Psoas muscle (tissue), 8 donors: ENCODE measurements at regions of chr15 and their contacts with region 1.

Region 1: GRCh38 chr15:90362936-90363212 is 10.8 kb downstream of the ZNF774 start:
- DNase-seq: no peak
- ATAC-seq: peak; percentile 63 to 71 (median 66)
- H3K4me3 ChIP-seq: no peak overlapping the region
- H3K27ac ChIP-seq: peak overlapping the region; percentile 85
- H3K4me1 ChIP-seq: peaks cover 21% of the 10 kb centered on the region
- H3K27me3 ChIP-seq: no peaks in the 10 kb centered on the region
- CTCF ChIP-seq: no peak

Region 2: DNA sequence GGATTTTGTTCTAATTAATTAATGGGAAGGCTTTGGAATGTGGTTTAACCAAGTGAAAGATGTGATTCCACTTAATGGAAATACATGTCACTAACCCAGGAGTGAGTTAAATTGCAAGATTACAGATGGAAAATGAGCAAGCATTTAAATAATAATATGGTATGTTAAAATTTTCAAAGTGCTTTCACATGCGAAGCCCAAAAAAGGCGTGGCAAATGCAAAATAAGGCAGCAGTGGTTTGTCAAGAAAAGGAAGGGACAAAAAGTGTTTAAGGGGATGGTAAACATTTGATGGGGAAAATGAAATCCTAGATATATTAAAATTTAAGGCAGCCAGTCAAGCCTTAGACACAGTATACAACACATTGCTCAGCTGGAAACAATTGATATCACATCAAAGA is 784.7 kb before region 1 on chr15:
- intact Hi-C with region 1: no loop called
- DNase-seq: no peak
- ATAC-seq: no peak
- H3K4me3 ChIP-seq: no peak overlapping the region
- H3K27ac ChIP-seq: no peak overlapping the region
- H3K4me1 ChIP-seq: no peaks in the 10 kb centered on the region
- H3K27me3 ChIP-seq: no peaks in the 10 kb centered on the region
- CTCF ChIP-seq: no peak

Region 3: GRCh38 chr15:90286678-90287077 is 76.2 kb before region 1 on chr15:
- intact Hi-C with region 1: no loop called
- DNase-seq: no peak
- ATAC-seq: no peak
- H3K4me3 ChIP-seq: no peak overlapping the region
- H3K27ac ChIP-seq: no peak overlapping the region
- H3K4me1 ChIP-seq: no peaks in the 10 kb centered on the region
- H3K27me3 ChIP-seq: no peaks in the 10 kb centered on the region
- CTCF ChIP-seq: peak; percentile 26

Region 4: GRCh38 chr15:90320061-90320884 is 42.6 kb before region 1 on chr15:
- intact Hi-C with region 1: no loop called
- DNase-seq: peak; percentile 78 to 90
- ATAC-seq: peak; percentile 90 to 94 (median 92)
- H3K4me3 ChIP-seq: peak overlapping the region; percentile 42
- H3K27ac ChIP-seq: peak overlapping the region; percentile 27
- H3K4me1 ChIP-seq: peaks cover 19% of the 10 kb centered on the region
- H3K27me3 ChIP-seq: no peaks in the 10 kb centered on the region
- CTCF ChIP-seq: peak; percentile 97

Region 5: DNA sequence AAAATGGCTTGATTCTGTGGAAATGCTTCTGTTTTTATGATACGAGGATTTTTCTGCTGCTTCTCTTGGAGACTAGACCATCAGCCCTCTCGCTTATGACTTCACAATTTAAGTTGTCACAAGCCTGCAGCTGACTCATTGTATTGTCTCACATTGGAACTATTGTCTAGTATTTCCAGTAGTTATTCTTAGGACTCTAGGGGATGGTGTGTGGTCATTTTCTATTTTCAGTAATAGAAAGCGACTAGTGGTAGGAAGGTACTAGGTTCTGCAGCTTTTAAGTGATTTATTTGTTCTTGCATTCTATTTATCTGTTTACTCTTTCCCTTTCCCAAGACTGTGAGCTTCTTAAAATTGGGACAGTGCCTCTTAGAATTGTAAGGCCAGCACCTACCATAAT is 100.5 kb after region 1 on chr15:
- intact Hi-C with region 1: loop called in 1 of 2 experiments (anchors 5 kb)
- DNase-seq: no peak
- ATAC-seq: peak; percentile 88 to 91 (median 89)
- H3K4me3 ChIP-seq: peak overlapping the region; percentile 30
- H3K27ac ChIP-seq: peak overlapping the region; percentile 86
- H3K4me1 ChIP-seq: peaks cover 43% of the 10 kb centered on the region
- H3K27me3 ChIP-seq: no peaks in the 10 kb centered on the region
- CTCF ChIP-seq: peak; percentile 25

Region 6: DNA sequence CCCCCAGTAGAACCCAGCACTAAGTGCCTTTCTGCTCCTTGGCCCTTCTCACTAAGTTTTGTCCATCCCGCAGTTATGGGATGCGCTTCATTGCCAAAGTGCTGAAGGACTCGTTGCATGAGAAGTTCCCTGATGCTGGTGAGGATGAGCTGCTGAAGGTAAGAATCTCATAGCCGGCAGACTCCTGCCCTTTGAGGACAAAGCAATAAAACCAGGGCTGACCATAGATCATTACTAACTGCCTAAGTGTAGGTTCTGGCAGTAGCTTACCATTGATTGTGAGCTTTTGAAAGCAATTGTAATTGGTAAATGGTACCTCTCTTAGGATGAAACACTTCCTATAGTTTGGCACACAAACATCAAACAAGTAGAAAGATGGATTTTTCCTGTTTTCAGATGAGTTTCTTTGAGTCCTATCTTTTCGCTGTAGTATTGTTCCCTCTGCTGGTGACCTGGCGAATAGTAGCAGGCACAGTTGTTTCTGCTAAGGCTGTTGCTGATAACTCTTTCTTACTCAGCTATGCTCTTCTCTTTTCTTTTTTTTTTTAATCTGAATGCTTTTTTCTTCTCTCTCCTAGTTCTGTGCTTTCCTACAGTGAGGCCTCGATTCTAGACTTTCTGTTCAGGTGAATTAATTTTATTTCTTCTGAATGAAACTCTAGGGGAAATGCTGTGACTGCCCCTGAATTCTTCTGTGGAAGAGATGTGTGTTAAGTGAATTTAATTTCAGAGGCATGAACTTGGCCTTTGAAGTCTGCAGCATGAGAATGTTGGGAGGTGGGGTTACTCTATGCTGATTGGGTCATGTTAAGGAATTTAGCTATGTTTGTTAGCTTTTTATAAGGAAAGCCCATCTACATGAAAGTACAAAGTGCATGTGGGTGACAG is 119.5 kb after region 1 on chr15:
- intact Hi-C with region 1: loop called (anchors 2 to 5 kb)
- DNase-seq: no peak
- ATAC-seq: peak in 3 of 4 donors; percentile 32 to 69 (median 58)
- H3K4me3 ChIP-seq: no peak overlapping the region
- H3K27ac ChIP-seq: no peak overlapping the region
- H3K4me1 ChIP-seq: no peaks in the 10 kb centered on the region
- H3K27me3 ChIP-seq: no peaks in the 10 kb centered on the region
- CTCF ChIP-seq: peak; percentile 58